Endothelial cell of umbilical vein (primary cell): ENCODE measurements at regions of chrX and their contacts with region 1.

Region 1: DNA sequence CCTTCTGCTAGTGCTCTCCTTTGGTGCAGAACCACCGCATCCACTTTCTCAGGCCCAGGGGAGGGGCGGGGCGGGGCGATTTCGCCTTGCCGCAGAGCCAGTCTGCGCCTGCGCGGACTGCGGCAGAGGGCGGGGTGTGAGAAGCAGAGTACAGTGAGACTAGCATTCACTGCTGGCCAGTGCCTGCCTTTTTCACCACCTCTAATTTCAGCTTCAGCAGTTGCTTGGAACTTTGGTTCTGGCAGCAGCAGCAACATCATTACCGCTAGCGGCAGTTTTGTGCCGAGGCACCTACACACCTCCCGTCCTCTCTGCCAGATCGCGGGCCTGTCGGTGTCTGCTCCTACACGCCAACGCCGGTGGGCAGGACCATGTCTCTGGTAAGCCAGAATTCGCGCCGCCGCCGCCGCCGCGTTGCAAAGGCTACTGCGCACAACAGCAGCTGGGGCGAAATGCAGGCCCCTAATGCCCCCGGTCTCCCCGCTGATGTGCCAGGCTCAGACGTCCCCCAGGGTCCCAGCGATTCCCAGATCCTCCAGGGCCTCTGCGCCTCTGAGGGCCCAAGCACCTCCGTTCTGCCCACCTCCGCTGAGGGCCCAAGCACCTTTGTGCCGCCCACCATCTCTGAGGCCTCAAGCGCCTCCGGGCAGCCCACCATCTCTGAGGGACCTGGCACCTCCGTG is at the start of gene MAGEE1:
- DNase-seq: peak; percentile 51
- H3K4me3 ChIP-seq: peak within 1 kb of the TSS in 2 of 3 experiments; percentile 43 to 48
- H3K27ac ChIP-seq: no peak within 1 kb of the TSS
- H3K4me1 ChIP-seq: no peaks in the 10 kb centered on the region
- H3K27me3 ChIP-seq: no peaks in the 10 kb centered on the region
- CTCF ChIP-seq: no peak
- POLR2A ChIP-seq: no peak
- total RNA-seq, gene MAGEE1: 0.74 and 0.95 TPM in 2 replicates

Region 2: DNA sequence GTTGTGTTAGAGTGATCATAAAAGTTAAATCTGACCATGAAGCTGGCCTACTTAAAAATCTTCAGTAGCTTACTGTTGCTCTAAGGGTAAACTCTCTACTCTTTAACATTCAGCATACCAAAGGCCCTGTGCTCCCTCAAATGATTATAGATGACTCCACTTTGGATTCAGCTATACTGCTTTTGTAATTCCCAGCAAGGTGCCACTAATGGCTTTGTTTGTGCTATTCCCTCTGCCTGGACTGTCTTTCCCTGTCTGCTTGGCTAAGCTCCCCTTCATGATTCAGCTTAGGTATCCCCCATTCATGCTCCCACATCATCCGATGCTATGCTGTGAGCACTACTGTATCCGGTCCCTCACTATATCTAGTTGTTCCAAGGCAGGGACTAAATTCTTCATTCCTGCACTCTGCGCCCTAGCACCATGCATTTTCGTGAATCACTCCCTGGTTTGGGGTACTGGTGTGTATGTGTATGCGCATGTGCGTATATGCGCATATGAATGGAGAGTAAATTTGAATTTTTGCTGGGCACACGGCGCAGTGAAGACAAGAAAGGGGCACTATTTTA is 255.3 kb before region 1 on chrX:
- CTCF ChIA-PET with region 1: no interaction called
- POLR2A ChIA-PET with region 1: no interaction called
- dilution Hi-C with region 1: no loop called
- intact Hi-C with region 1: loop called (anchors 10 kb)
- DNase-seq: no peak
- H3K4me3 ChIP-seq: peak overlapping the region; percentile 11 to 85 (median 79)
- H3K27ac ChIP-seq: peak overlapping the region; percentile 20
- H3K4me1 ChIP-seq: peaks cover 15% of the 10 kb centered on the region
- H3K27me3 ChIP-seq: no peaks in the 10 kb centered on the region
- CTCF ChIP-seq: no peak
- POLR2A ChIP-seq: no peak

Region 3: GRCh38 chrX:76957485-76957884 is 529.8 kb after region 1 on chrX:
- CTCF ChIA-PET with region 1: no interaction called
- POLR2A ChIA-PET with region 1: no interaction called
- dilution Hi-C with region 1: no loop called
- intact Hi-C with region 1: no loop called
- DNase-seq: no peak
- H3K4me3 ChIP-seq: no peak overlapping the region
- H3K27ac ChIP-seq: no peak overlapping the region
- H3K4me1 ChIP-seq: no peaks in the 10 kb centered on the region
- H3K27me3 ChIP-seq: no peaks in the 10 kb centered on the region
- CTCF ChIP-seq: no peak
- POLR2A ChIP-seq: no peak